A549 (cell line): ENCODE measurements at regions of chr3 and their contacts with region 1.

Region 1: DNA sequence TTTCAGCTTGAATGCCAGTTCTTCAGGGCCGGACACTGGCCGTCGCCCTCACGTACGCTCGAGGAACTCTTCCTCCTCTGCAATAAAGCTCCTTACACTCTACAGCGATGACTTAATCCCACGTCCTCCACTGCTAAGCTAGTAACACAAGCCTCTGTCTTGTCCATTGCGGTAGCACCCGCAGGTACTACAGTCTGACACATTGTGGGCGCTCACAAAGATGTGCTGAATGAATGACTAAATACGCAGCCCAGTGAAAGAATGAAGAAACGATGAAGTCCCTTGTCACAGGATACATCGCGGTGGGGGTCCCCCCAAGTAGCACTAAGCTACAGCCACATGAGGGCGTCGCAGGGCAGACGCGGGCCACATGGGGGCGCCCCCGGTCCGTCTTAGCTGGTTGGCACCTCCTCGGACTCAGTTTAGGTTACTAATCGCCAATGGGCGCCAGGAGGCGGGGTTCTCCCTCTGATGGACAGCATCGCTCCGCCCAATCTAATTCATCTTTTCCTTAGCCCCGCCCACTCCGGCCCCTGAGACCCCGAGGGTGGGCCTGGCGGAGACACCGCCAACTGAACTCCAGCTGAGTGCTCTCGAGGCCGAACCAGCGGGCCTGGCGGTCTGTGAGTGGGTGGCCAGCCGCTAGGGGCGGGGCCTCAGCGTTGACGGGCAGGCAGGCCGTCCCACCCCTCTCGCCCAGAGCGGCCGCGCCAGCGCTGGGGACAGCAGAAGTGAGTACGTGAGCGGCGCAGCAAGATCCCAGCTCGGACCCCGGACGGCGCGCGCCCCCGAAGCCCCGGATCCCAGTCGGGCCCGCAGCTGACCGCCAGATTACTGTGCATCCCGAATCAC is at the start of gene EPHB3:
- DNase-seq: peak; percentile 96
- ATAC-seq: peak; percentile 91 to 98
- H3K4me3 ChIP-seq: peak within 1 kb of the TSS; percentile 59
- H3K27ac ChIP-seq: peak within 1 kb of the TSS; percentile 43 to 79; a peak in 4 of 6 replicates
- H3K4me1 ChIP-seq: peaks cover 28% of the 10 kb centered on the region
- CTCF ChIP-seq: peak; percentile 98
- EP300 ChIP-seq: no peak
- POLR2A ChIP-seq: peak; percentile 69
- RAD21 ChIP-seq: peak; percentile 94 to 97
- polyA plus RNA-seq, gene EPHB3: 0.36 and 0.52 TPM in 2 replicates

Region 2: GRCh38 chr3:184574515-184575417 is 13.5 kb after region 1 on chr3:
- CTCF ChIA-PET with region 1: interaction called, 37 read pairs
- POLR2A ChIA-PET with region 1: no interaction called
- DNase-seq: no peak
- ATAC-seq: no peak; a peak in 1 of 6 replicates
- H3K4me3 ChIP-seq: no peak overlapping the region
- H3K27ac ChIP-seq: no peak overlapping the region
- H3K4me1 ChIP-seq: no peaks in the 10 kb centered on the region
- CTCF ChIP-seq: no peak
- EP300 ChIP-seq: no peak
- POLR2A ChIP-seq: no peak
- RAD21 ChIP-seq: no peak

Region 3: DNA sequence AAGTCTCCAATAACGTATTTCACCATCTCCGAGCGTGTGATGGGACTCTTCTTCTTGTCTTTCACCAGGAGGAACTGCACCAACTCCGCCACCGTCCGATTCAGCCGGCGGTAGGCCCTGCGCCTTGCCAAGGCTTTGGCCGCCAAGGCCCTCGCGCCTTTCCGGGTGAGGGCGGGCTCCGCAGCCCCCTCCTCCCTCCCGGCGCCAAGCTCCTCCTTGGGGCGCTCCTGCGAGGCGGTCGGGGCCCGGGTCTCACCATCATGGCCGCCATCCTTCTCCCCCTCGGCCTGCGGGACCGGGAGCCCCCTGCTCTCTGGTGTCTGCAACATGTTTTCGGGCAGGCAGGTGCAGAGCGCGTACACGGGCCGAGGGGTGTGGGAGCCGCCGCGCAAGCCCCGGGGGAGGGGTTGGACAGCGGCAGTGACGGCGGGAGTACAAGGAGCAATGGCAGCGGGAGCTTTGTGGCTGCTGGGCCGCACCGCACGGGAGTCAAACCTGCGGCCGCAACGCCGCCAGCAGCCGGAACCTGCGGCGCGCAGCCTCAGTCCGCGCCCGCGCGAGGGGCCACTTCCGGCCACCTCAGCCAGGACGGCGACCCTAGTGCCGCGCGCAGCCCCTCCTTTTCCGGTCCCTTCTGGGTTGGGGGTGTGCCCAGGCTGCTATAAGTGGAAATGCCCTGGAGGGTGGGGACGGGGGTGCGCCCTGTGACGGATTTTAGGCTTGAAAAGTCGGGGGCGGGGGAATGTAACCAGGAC is 150.4 kb after region 1 on chr3 and contains the start of gene MAGEF1:
- CTCF ChIA-PET with region 1: interaction called, 11 read pairs
- POLR2A ChIA-PET with region 1: interaction called, 9 read pairs
- DNase-seq: peak; percentile 84 to 85
- ATAC-seq: peak; percentile 94 to 97
- H3K4me3 ChIP-seq: peak within 1 kb of the TSS; percentile 75
- H3K27ac ChIP-seq: peak within 1 kb of the TSS; percentile 90 to 97
- H3K4me1 ChIP-seq: peaks cover 12% of the 10 kb centered on the region; the same call in 2 of the 3 replicates
- CTCF ChIP-seq: no peak
- EP300 ChIP-seq: no peak
- POLR2A ChIP-seq: peak; percentile 70
- RAD21 ChIP-seq: no peak
- polyA plus RNA-seq, gene MAGEF1: 13.9 and 19.6 TPM in 2 replicates

Region 4: DNA sequence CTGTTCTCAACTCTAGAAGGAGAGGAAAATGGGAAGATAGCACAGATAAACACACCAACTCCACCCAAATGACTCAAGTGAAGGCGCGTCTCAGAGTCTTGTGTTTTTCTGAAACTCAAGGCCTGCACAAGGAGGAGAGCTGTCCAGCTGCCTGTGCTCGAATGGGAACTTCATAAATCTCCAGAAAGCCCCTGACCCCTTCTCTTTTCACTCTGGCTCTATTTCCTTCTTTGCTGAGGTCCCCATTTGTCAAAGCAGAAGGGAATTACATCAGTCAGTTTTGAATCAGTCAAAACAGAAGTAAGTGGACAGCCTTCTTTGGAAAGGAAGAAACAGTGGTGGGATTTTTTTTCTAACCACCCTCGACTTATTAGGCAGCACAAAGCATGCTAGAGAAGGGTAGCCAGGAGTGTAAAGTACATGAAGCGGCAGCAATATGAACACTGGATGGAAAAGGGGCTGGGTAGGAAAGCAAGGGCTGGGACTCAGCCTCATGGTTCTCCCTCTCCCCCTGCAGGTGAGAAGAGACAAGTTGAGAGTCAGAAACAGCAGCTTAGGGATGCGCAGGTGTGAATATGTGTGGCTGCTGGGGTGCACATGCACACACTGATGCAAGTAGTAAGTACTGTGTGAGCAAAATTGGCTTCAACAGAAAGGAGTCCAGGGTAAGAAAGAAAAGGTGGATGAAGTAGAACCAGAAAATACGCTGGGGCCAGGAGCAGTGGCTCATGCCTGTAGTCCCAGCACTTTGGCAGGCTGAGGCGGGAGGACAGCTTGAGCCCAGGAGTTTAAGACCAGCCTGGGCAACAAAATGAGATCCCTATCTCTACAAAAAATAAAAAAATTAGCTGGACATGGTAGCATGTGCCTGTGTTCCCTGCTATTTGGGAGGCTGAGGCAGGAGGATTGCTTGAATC is 187.2 kb after region 1 on chr3:
- CTCF ChIA-PET with region 1: interaction called, 21 read pairs
- POLR2A ChIA-PET with region 1: no interaction called
- DNase-seq: peak; percentile 21 to 38
- ATAC-seq: peak; percentile 81 to 91
- H3K4me3 ChIP-seq: no peak overlapping the region
- H3K27ac ChIP-seq: no peak overlapping the region
- H3K4me1 ChIP-seq: no peaks in the 10 kb centered on the region
- CTCF ChIP-seq: peak; percentile 18; the same call in 2 of the 3 replicates
- EP300 ChIP-seq: no peak
- POLR2A ChIP-seq: no peak
- RAD21 ChIP-seq: peak in 1 of 2 experiments; percentile 34; a peak in 2 of 5 replicates

Region 5: GRCh38 chr3:184777336-184778004 is 216.2 kb after region 1 on chr3:
- CTCF ChIA-PET with region 1: interaction called, 22 read pairs
- POLR2A ChIA-PET with region 1: interaction called, 3 read pairs
- DNase-seq: peak; percentile 82 to 91
- ATAC-seq: peak; percentile 89 to 97
- H3K4me3 ChIP-seq: no peak overlapping the region
- H3K27ac ChIP-seq: no peak overlapping the region
- H3K4me1 ChIP-seq: no peaks in the 10 kb centered on the region
- CTCF ChIP-seq: peak; percentile 74
- EP300 ChIP-seq: no peak
- POLR2A ChIP-seq: no peak
- RAD21 ChIP-seq: peak; percentile 87 to 90

Region 6: GRCh38 chr3:184796556-184797342 is 235.5 kb after region 1 on chr3:
- CTCF ChIA-PET with region 1: interaction called, 15 read pairs
- POLR2A ChIA-PET with region 1: no interaction called
- DNase-seq: no peak
- ATAC-seq: no peak
- H3K4me3 ChIP-seq: no peak overlapping the region
- H3K27ac ChIP-seq: no peak overlapping the region
- H3K4me1 ChIP-seq: no peaks in the 10 kb centered on the region
- CTCF ChIP-seq: no peak
- EP300 ChIP-seq: no peak
- POLR2A ChIP-seq: no peak
- RAD21 ChIP-seq: no peak